ENCODE measurements at regions of chr12 and their contacts with region 1.

Region 1: GRCh38 chr12:110600254-110600653 is 13.7 kb upstream of the TCTN1 start:
- DNase-seq: no peak
- H3K4me3 Mint-ChIP-seq: no peak overlapping the region
- H3K27ac Mint-ChIP-seq: peak overlapping the region; percentile 16
- H3K4me1 Mint-ChIP-seq: peaks cover 4% of the 10 kb centered on the region
- H3K27me3 Mint-ChIP-seq: no peaks in the 10 kb centered on the region

Region 2: GRCh38 chr12:110431957-110432587 is 168.2 kb before region 1 on chr12:
- CTCF ChIA-PET with region 1: interaction called, 17 read pairs
- POLR2A ChIA-PET with region 1: interaction called, 4 read pairs
- intact Hi-C with region 1: no loop called
- DNase-seq: peak; percentile 57
- H3K4me3 Mint-ChIP-seq: no peak overlapping the region
- H3K27ac Mint-ChIP-seq: no peak overlapping the region
- H3K4me1 Mint-ChIP-seq: peaks cover 10% of the 10 kb centered on the region
- H3K27me3 Mint-ChIP-seq: no peaks in the 10 kb centered on the region

Region 3: DNA sequence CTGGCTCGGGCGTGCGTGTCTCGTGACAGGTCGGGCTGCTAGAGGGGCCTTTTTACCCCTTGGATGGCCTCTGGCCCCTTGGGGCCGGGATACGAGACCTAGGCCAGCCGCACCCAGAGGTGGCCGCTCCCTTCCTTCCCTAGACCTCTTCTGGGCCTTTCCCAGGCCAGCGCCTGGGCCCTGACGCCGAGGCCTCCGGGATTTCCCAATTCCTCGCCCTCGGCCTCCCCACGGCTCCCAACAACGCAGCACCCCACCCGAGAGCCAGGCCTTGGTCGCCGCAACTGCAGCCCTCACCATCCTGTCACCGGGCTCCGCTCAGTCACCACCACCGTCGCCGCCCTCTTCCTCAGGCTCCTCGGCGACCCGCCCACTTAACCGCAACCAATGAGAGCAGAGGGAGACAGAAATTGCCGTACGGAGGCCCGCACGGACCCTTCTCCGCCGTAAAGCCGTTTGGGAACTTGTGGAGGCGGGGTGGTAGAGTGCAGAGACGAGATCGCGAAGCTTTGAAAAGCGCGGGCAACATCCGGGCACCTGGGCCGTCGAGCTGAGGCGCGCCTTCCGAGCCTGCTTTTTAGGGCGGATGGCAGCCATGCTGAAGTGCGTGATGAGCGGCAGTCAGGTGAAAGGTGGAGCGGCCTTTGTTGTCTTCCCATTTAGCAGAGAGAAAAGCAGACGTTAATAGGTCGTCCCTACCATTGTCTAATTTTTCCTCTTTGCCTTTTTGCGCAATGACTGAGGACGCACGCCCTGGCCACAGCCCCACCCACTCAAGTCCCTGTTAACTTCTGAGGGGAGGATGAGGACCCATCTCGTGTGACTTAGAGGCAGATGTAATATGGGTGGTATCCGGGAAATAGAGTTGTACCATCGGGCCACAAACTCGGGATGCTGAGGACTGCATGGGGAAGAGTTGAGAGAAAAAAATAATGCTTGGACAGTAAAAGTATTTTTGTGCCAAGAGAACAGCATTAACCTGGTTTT is 98.2 kb before region 1 on chr12 and contains the starts of genes RAD9B and VPS29:
- CTCF ChIA-PET with region 1: interaction called, 189 read pairs
- POLR2A ChIA-PET with region 1: interaction called, 4 read pairs
- intact Hi-C with region 1: no loop called
- DNase-seq: peak; percentile 100
- H3K4me3 Mint-ChIP-seq: peak within 1 kb of the TSS; percentile 99
- H3K27ac Mint-ChIP-seq: peak within 1 kb of the TSS; percentile 97
- H3K4me1 Mint-ChIP-seq: peaks cover 30% of the 10 kb centered on the region
- H3K27me3 Mint-ChIP-seq: no peaks in the 10 kb centered on the region
- total RNA-seq, gene RAD9B: 1.1 to 2.7 TPM
- total RNA-seq, gene VPS29: 100 to 106 TPM

Region 4: GRCh38 chr12:110531741-110532333 is 68.4 kb before region 1 on chr12:
- CTCF ChIA-PET with region 1: interaction called, 20 read pairs
- POLR2A ChIA-PET with region 1: no interaction called
- intact Hi-C with region 1: no loop called
- DNase-seq: no peak
- H3K4me3 Mint-ChIP-seq: no peak overlapping the region
- H3K27ac Mint-ChIP-seq: peak overlapping the region; percentile 1
- H3K4me1 Mint-ChIP-seq: peaks cover 30% of the 10 kb centered on the region
- H3K27me3 Mint-ChIP-seq: no peaks in the 10 kb centered on the region

Region 5: DNA sequence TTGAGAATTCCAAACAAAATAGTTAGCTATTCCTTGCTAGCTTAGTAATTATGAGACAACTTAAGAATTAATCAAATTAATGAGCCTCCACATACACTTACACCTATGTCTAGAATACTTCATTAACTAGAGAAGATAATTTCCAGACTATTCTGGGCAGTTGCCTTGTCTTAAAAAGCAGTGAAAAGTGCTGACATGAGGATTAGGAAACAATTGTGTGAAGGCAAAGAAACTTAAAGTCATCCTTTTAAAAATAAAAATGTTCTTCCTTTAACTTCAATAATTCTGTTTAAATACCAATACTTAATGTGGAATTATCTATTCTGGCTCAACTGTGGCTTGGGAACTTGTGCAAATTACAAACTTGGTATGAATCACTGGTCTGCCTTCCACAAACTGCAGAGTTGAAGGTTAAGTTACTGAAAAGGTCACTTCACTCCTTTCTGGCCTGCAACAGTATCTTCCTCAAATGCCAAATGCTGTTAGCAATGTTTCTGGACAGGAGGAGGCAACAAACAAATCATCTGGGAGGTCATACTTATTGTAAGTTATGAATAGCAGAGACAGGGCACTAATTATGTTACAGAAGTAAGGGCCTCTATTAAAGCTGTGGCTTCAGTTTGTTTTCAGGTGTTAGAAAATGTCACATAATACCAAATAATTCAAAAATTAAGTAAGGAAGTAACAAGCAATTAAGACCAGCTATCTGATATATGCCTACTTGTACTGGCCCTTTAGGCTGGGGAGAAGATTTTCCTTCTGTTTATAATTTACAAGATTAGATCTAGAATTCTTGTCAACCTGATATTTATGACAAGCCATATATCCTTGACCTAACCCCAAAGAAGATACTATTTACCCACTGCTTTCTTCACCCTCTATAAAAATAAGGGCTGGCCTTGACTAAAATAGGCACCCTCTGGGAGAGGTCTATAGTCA is 36.3 kb before region 1 on chr12:
- CTCF ChIA-PET with region 1: interaction called, 176 read pairs
- POLR2A ChIA-PET with region 1: no interaction called
- intact Hi-C with region 1: no loop called
- DNase-seq: no peak
- H3K4me3 Mint-ChIP-seq: no peak overlapping the region
- H3K27ac Mint-ChIP-seq: peak overlapping the region; percentile 83
- H3K4me1 Mint-ChIP-seq: peaks cover 64% of the 10 kb centered on the region
- H3K27me3 Mint-ChIP-seq: no peaks in the 10 kb centered on the region

Region 6: DNA sequence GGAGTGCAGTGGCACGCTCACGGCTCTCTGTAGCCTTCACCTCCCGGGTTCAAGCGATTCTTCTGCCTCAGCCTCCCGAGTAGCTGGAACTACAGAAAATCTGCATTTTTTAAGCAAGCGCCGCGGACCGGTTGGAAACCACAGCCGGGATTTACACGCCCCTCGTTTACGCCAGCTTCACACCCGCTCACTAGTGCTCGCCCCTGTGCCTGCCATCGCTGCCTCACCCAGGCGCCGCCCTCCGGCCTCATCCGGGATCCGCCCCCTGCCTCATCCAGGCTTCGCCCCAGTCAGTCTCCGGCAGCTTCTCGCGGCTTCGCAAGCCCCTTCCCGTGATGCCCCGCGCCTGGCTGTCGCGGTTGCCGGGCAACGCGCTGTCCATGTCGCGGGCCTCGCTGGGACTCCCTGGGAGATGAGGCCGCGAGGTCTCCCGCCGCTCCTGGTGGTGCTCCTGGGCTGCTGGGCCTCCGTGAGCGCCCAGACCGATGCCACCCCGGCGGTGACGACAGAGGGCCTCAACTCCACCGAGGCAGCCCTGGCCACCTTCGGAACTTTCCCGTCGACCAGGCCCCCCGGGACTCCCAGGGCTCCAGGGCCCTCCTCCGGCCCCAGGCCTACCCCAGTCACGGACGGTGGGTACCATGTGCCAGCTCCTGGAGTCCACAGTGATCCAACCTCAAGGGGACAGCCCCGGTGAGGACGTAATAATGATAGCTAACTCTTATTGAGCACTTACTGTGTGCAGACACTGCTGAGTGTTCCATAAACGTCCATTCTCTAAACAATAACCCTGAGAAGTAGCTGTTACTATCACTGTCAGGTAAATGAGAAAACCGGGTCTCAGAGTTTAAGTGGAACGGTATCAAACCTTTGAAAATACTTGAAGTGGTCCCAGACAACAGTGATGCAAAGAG is 13.8 kb after region 1 on chr12 and contains the start of gene TCTN1:
- CTCF ChIA-PET with region 1: interaction called, 39 read pairs
- POLR2A ChIA-PET with region 1: interaction called, 4 read pairs
- intact Hi-C with region 1: no loop called
- DNase-seq: peak; percentile 99
- H3K4me3 Mint-ChIP-seq: peak within 1 kb of the TSS; percentile 85
- H3K27ac Mint-ChIP-seq: peak within 1 kb of the TSS; percentile 54
- H3K4me1 Mint-ChIP-seq: peaks cover 9% of the 10 kb centered on the region
- H3K27me3 Mint-ChIP-seq: no peaks in the 10 kb centered on the region
- total RNA-seq, gene TCTN1: 6.4 to 7.6 TPM

Measured in activated CD4-positive, alpha-beta memory T cell treated with anti-CD3 and anti-CD28 coated beads for 36 hours (primary cell).